ENCODE measurements at regions of chr17 and their contacts with region 1.

Region 1: GRCh38 chr17:75855310-75856081 is at the start of gene WBP2:
- H3K4me3 ChIP-seq: peak within 1 kb of the TSS; percentile 74
- H3K27ac ChIP-seq: peak within 1 kb of the TSS; percentile 88
- H3K4me1 ChIP-seq: peaks cover 8% of the 10 kb centered on the region
- CTCF ChIP-seq: peak; percentile 96

Region 2: DNA sequence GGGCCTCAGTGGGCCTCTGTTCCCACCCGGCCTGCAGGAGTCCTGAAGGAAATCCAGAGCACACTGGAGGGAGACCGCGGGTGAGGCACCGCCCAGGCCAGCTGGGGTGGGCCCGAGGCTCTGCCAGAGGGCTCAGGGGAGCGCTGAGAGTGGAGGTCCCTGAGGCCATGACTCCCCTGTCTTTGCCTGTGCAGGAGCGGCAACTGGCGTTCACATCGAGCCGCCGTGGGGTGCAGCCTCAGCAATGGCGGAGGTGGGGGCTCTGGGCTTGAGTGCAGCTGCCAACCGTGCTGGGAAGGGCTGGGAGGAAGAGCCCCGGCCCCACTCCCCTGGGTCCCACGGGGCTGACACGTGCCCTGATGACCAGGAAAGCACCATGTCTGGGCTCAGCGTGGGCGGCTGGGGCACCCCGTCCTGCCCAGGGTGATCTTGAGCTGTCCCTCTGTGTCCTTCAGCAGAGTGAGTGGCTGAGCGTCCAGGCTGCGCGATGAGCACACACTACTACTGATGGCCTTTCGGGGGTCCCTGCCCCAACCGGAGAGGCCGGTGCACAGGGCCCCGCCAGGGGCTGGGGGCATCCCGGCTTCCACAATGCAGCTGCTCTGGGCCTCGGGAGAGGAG is 281.0 kb before region 1 on chr17:
- CTCF ChIA-PET with region 1: no interaction called
- POLR2A ChIA-PET with region 1: no interaction called
- H3K4me3 ChIP-seq: no peak overlapping the region
- H3K27ac ChIP-seq: no peak overlapping the region
- H3K4me1 ChIP-seq: no peaks in the 10 kb centered on the region; the same call in 1 of the 2 replicates
- CTCF ChIP-seq: no peak

Region 3: GRCh38 chr17:75757086-75757681 is 98.3 kb before region 1 on chr17:
- CTCF ChIA-PET with region 1: no interaction called
- POLR2A ChIA-PET with region 1: no interaction called
- H3K4me3 ChIP-seq: no peak overlapping the region
- H3K27ac ChIP-seq: no peak overlapping the region
- H3K4me1 ChIP-seq: no peaks in the 10 kb centered on the region
- CTCF ChIP-seq: no peak

Region 4: DNA sequence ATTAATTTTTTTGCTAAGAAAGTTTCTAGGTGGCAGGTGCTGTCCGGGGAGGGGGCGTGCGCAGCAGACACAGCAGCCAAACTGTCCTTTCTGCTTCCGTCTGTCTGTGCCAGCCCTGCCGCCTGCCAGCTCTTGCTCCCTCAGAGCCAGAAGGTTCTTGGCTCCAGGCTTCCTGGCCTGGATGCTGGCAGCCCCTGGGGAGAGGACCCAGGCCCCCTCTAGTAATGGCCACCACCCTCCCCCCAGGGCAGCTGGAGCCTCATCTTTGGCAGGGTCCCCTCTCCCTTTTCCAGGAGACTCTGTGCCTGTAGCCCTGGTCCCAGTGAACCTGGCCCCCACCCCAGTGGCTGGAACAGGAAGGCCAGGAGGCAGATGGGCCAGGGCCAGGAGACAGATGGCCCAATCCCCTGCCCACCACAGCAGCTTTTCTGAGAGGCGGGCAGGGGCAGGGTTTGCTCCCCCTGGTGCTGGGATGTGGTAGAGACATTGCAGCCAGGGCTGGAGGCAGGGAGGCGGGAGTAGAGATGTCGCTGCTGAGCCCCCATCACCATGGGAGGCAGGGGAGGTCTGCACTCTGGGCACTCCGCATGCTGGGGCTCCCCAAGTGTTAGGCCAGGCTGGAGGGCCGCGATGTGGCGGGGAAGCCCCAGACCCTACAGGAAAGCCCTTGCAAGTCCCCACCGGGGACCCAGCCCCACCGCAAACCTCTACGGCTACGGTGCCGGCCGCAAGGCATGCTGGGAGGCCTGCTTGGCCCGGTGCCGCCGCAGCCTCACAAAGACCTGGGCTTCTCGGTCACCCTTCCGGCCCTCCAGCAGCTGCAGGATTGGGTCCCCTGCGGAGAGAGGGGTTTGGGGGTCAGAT is 28.0 kb before region 1 on chr17:
- CTCF ChIA-PET with region 1: interaction called, 10 read pairs
- POLR2A ChIA-PET with region 1: interaction called, 10 read pairs
- H3K4me3 ChIP-seq: no peak overlapping the region
- H3K27ac ChIP-seq: peak overlapping the region; percentile 55
- H3K4me1 ChIP-seq: no peaks in the 10 kb centered on the region
- CTCF ChIP-seq: peak; percentile 88

Region 5: DNA sequence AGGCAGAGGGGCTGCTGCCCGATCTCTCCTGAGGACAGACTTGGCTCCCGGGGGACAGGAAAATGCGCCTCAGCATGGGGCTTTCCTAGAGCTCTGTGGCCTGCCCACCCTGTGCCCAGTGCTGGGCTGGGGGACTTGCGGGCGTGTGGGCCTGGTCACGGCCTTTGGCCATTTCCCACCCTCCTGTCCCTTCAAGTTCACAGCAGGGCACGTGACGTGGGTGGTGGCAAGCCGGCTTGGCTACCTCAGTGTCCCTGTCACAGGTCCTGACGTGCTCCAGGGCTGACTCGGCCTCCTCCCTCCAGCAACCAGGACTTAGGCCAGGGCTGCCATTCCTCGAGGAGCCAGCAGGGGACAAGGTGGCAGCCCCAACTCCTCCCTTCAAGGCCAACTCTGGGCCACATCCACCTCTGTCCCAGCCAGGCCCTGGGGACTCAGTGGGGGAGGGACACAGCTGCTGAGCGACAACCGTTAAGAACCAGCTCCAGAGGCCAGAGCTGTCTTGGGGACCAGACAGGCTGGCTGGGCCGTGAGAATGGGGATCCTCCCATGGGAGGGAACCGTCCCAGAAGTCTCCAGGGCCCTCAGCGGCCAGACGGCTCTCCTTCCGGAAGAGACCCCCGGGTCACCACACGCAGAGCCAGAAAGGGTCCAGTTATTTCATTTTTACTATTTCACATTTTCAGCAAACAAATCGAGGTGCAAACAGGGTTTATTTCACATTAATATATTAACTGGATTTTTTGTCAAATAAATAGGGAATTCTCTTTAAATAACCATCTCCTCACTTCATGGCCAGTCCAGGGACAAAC is 10.2 kb before region 1 on chr17:
- CTCF ChIA-PET with region 1: interaction called, 40 read pairs
- POLR2A ChIA-PET with region 1: interaction called, 28 read pairs
- H3K4me3 ChIP-seq: no peak overlapping the region
- H3K27ac ChIP-seq: no peak overlapping the region
- H3K4me1 ChIP-seq: no peaks in the 10 kb centered on the region; the same call in 1 of the 2 replicates
- CTCF ChIP-seq: peak; percentile 91

Region 6: GRCh38 chr17:75872434-75873351 is 17.2 kb after region 1 on chr17:
- CTCF ChIA-PET with region 1: interaction called, 84 read pairs
- POLR2A ChIA-PET with region 1: interaction called, 34 read pairs
- H3K4me3 ChIP-seq: no peak overlapping the region
- H3K27ac ChIP-seq: peak overlapping the region; percentile 47
- H3K4me1 ChIP-seq: peaks cover 4% of the 10 kb centered on the region
- CTCF ChIP-seq: no peak

Region 7: GRCh38 chr17:75877752-75878173 is 22.3 kb after region 1 on chr17:
- CTCF ChIA-PET with region 1: interaction called, 84 read pairs
- POLR2A ChIA-PET with region 1: interaction called, 34 read pairs
- H3K4me3 ChIP-seq: peak overlapping the region; percentile 24
- H3K27ac ChIP-seq: peak overlapping the region; percentile 61; the same call in 1 of the 2 replicates
- H3K4me1 ChIP-seq: peaks cover 2% of the 10 kb centered on the region
- CTCF ChIP-seq: no peak; the same call in none of the 2 replicates

Region 8: GRCh38 chr17:75889454-75889853 is 34.0 kb after region 1 on chr17:
- CTCF ChIA-PET with region 1: interaction called, 8 read pairs
- POLR2A ChIA-PET with region 1: interaction called, 20 read pairs
- H3K4me3 ChIP-seq: no peak overlapping the region
- H3K27ac ChIP-seq: no peak overlapping the region
- H3K4me1 ChIP-seq: no peaks in the 10 kb centered on the region
- CTCF ChIP-seq: no peak

Region 9: DNA sequence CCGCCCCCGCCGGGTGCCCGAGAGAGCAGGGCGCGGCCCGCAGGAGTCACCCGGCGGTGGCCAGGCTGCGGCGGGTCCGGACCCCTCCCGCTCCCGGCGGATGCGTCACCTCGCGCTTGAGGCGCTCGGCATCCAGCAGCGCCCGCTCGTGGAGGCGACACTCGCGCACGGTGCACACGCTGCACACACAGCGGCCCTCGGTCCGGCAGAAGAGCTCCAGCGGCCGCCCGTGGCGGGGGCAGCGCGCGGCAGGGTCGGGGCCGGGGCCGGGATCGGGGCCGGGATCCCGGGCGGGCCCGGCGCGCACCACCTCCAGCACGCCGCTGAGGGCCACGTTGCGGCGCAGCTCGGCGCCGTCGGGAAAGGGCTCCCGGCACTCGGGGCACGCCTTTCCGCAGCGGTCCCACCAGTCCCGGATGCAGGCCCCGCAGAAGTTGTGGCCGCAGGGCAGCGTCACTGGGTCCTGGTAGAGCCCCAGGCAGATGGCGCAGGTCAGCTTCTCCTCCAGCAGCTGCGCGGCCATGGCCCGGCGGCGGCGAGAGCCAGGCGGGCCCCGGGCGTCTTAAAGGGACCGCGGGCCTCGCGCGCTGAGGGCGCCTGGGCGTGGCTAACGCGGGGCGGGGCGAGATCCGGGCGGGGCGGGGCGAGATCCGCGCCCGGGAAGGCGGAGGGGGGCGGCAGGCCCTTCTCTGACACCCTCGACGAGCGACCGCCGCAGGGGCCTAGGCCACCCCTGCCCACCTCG is 41.1 kb after region 1 on chr17 and contains the start of gene TRIM65:
- CTCF ChIA-PET with region 1: interaction called, 11 read pairs
- POLR2A ChIA-PET with region 1: interaction called, 20 read pairs
- H3K4me3 ChIP-seq: peak within 1 kb of the TSS; percentile 86
- H3K27ac ChIP-seq: peak within 1 kb of the TSS; percentile 98
- H3K4me1 ChIP-seq: peaks cover 10% of the 10 kb centered on the region
- CTCF ChIP-seq: no peak